ENCODE measurements at regions of chr20 and their contacts with region 1.

Region 1: GRCh38 chr20:4519530-4519929 is 202.2 kb upstream of the PRND start:
- DNase-seq: no peak
- ATAC-seq: peak; percentile 70
- H3K4me3 ChIP-seq: no peak overlapping the region
- H3K27ac ChIP-seq: no peak overlapping the region
- H3K4me1 ChIP-seq: no peaks in the 10 kb centered on the region
- H3K27me3 ChIP-seq: no peaks in the 10 kb centered on the region

Region 2: GRCh38 chr20:4449957-4450715 is 69.4 kb before region 1 on chr20:
- intact Hi-C with region 1: loop called in 1 of 2 experiments (anchors 10 kb)
- DNase-seq: no peak
- ATAC-seq: no peak
- H3K4me3 ChIP-seq: peak overlapping the region in 1 of 2 donors; percentile 2
- H3K27ac ChIP-seq: peak overlapping the region; percentile 55 to 74
- H3K4me1 ChIP-seq: peaks cover 7 to 12% of the 10 kb centered on the region in 2 donors
- H3K27me3 ChIP-seq: no peaks in the 10 kb centered on the region